ENCODE measurements at regions of chr11 and their contacts with region 1.

Region 1: DNA sequence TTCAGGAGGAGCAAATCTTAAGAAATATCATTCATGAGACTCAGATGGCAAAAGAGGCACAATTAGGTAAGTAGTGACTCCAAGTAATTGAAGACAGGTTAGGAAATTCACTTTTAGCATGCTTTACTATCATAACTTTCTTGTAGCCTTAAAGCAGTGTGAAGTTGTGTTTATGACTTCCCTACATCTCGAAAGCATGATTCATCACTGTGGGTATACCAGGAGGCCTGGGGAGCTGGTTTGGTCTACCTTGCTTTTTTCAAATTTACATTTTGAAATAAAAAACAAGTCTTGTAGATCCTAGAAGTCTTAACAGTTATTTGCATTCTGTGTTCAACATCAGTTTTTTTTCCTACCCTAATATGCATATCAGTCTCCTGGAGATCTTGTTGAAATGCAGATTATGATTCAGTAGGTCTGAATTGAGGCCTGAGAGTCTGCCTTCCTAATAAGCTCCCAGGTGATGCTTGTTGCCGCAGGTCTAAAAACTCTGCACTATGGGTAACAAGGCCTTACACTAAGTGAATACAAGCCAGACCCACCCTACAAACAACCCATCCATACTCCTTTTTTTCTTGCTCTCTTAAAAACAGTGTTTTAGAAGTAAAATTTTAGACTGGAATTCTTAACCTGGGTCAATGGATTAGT is 41.4 kb downstream of the TTC17 start:
- DNase-seq: no peak
- H3K4me3 ChIP-seq: no peak overlapping the region
- H3K27ac ChIP-seq: no peak overlapping the region
- H3K4me1 ChIP-seq: no peaks in the 10 kb centered on the region
- H3K27me3 ChIP-seq: no peaks in the 10 kb centered on the region
- CTCF ChIP-seq: no peak

Region 2: GRCh38 chr11:41895081-41895480 is 1505.0 kb before region 1 on chr11:
- CTCF ChIA-PET with region 1: no interaction called
- POLR2A ChIA-PET with region 1: no interaction called
- intact Hi-C with region 1: no loop called
- DNase-seq: no peak
- H3K4me3 ChIP-seq: no peak overlapping the region
- H3K27ac ChIP-seq: no peak overlapping the region
- H3K4me1 ChIP-seq: no peaks in the 10 kb centered on the region
- H3K27me3 ChIP-seq: no peaks in the 10 kb centered on the region
- CTCF ChIP-seq: no peak

Region 3: GRCh38 chr11:43447151-43447550 is 47.0 kb after region 1 on chr11:
- CTCF ChIA-PET with region 1: no interaction called
- POLR2A ChIA-PET with region 1: no interaction called
- intact Hi-C with region 1: loop called (anchors 5 kb)
- DNase-seq: no peak
- H3K4me3 ChIP-seq: no peak overlapping the region
- H3K27ac ChIP-seq: no peak overlapping the region
- H3K4me1 ChIP-seq: no peaks in the 10 kb centered on the region
- H3K27me3 ChIP-seq: no peaks in the 10 kb centered on the region
- CTCF ChIP-seq: no peak

Measured in A673 (cell line).